ENCODE measurements at regions of chr5 and their contacts with region 1.

Region 1: DNA sequence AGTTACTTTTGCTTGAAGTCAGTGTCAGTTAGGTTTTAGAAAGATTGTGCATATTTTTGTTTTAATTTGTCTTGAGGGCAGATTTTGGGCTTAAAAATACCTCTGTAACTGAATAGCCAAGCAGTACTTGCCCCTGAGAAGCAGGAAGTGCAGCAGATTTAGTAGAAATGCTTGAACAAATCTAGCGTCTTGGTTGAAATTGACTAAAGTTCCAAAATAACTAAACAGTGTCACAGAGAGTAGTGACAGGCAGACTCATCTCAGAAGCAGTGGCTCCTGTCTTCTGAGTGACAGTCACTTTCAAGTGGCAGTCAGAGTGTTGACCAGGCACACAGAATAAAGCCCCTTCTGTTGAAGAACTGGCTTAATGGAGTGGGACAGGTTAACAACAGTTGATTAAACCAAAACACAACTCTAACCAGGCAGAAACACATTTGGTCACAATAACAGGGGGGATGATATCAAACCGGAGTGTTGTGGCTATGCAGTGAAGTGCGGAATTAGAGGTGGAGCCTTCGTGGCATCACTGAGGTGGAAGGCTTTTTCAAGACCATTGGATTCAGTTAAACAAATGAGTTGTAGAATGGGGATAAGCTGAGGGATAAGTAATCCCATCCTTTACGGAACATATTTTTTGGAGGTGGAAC is 29.1 kb downstream of the TRIO start:
- DNase-seq: no peak
- ATAC-seq: no peak
- H3K4me3 ChIP-seq: no peak overlapping the region
- H3K4me3 Mint-ChIP-seq: no peak overlapping the region
- H3K27ac ChIP-seq: no peak overlapping the region
- H3K27ac Mint-ChIP-seq: no peak overlapping the region
- H3K4me1 ChIP-seq: peaks cover 0 to 24% of the 10 kb centered on the region in 2 experiments
- H3K4me1 Mint-ChIP-seq: peaks cover 10 to 16% (median 12%) of the 10 kb centered on the region in 3 donors
- H3K27me3 ChIP-seq: peaks cover 0 to 11% of the 10 kb centered on the region in 2 experiments
- H3K27me3 Mint-ChIP-seq: peaks cover 9 to 14% of the 10 kb centered on the region in 2 donors

Region 2: GRCh38 chr5:14133394-14133793 is 38.9 kb before region 1 on chr5:
- CTCF ChIA-PET with region 1: no interaction called
- POLR2A ChIA-PET with region 1: interaction called in 1 of 2 experiments, 10 read pairs
- DNase-seq: no peak
- ATAC-seq: no peak
- H3K4me3 ChIP-seq: no peak overlapping the region
- H3K4me3 Mint-ChIP-seq: no peak overlapping the region
- H3K27ac ChIP-seq: no peak overlapping the region
- H3K27ac Mint-ChIP-seq: no peak overlapping the region
- H3K4me1 ChIP-seq: no peaks in the 10 kb centered on the region
- H3K4me1 Mint-ChIP-seq: no peaks in the 10 kb centered on the region
- H3K27me3 ChIP-seq: peaks cover 0 to 16% of the 10 kb centered on the region in 2 experiments
- H3K27me3 Mint-ChIP-seq: peaks cover 27 to 39% of the 10 kb centered on the region in 2 donors